ENCODE measurements at regions of chr1 and their contacts with region 1.

Region 1: DNA sequence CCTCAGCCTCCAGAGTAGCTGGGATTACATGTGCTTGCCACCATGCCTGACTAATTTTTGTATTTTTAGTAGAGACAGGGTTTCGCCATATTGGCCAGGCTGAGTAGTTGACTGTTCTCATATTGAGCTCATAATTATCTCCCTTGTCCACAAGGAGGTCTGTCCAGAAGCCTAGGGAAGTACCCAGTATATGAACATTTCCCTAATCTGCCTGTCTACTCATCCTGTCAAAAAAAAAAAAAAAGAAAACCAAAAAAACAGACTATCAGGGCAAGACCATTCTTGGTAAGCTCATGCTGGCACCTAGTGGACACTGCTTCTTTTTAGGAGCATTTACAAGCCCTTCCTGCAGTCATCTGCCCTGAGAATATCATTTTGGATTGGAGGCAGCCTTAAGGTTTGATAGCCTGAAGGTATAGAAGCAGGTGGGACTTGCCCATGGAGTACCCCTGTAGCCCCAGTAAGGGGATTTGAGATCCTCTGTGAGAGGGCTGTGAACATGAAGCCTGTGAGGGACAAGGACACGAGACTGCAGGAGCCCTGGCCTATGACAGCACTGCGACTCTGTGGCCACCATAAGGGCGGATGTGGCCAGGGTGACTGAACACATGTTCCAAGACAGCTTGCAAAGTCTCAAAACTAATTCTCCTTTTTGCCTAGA is 10.8 kb upstream of the DUSP12 start:
- DNase-seq: peak; percentile 84
- ATAC-seq: peak; percentile 85
- H3K4me3 Mint-ChIP-seq: peak overlapping the region; percentile 37
- H3K27ac Mint-ChIP-seq: peak overlapping the region; percentile 88
- H3K4me1 Mint-ChIP-seq: peaks cover 52% of the 10 kb centered on the region
- H3K27me3 Mint-ChIP-seq: no peaks in the 10 kb centered on the region

Region 2: DNA sequence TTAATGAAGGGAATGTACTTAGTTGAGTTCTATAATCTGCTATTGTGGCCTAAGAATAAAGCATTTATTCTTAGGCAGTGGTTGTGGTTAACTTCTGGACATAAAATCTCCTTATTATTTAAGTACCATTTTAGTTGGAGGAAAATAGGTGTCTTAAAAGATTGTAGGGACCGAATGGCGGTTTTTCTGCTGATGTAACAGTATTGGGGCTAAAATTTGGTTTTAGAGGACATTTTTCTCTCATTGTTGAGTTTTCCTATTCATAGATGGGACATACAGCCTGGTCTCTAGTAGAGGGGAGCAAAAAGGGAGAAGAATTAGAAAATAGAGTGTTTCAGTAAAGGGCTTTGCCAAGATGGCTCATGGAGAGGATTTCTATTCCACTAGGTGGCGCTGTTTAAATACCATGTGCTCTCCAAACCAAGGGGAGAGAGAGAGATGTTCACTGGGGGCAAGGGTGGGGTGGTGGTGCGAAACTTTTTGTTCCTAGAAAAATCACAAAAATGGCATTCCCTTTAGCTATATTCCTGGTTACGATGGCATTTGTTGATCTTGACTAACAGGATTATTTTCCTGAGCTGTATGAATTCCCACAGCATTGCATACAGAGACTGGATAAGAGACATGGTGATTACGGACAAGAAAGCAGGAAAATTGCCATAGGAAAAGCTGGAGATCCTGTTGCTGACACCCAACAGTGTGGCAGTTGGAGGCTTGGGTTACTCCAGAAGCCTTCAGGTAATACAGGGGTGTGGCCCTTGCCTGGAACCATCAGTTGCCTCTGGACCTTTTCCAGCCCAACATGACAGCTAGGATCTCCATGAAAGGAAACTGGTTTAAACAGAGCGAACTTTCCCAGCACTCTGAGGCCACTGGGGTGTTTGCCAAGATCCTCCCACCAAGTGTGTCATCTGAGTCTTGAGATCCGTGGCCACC is 251.7 kb before region 1 on chr1:
- CTCF ChIA-PET with region 1: interaction called, 89 read pairs
- POLR2A ChIA-PET with region 1: no interaction called
- DNase-seq: peak; percentile 66
- ATAC-seq: peak; percentile 73
- H3K4me3 Mint-ChIP-seq: no peak overlapping the region
- H3K27ac Mint-ChIP-seq: no peak overlapping the region
- H3K4me1 Mint-ChIP-seq: peaks cover 24% of the 10 kb centered on the region
- H3K27me3 Mint-ChIP-seq: peaks cover 38% of the 10 kb centered on the region

Region 3: GRCh38 chr1:161531986-161532643 is 206.6 kb before region 1 on chr1:
- CTCF ChIA-PET with region 1: interaction called, 12 read pairs
- POLR2A ChIA-PET with region 1: no interaction called
- DNase-seq: no peak
- ATAC-seq: no peak
- H3K4me3 Mint-ChIP-seq: no peak overlapping the region
- H3K27ac Mint-ChIP-seq: peak overlapping the region; percentile 57
- H3K4me1 Mint-ChIP-seq: peaks cover 23% of the 10 kb centered on the region
- H3K27me3 Mint-ChIP-seq: peaks cover 8% of the 10 kb centered on the region

Region 4: GRCh38 chr1:161726596-161727457 is 11.9 kb before region 1 on chr1:
- CTCF ChIA-PET with region 1: interaction called, 103 read pairs
- POLR2A ChIA-PET with region 1: interaction called, 21 read pairs
- DNase-seq: peak; percentile 85
- ATAC-seq: peak; percentile 71
- H3K4me3 Mint-ChIP-seq: peak overlapping the region; percentile 87
- H3K27ac Mint-ChIP-seq: peak overlapping the region; percentile 95
- H3K4me1 Mint-ChIP-seq: peaks cover 59% of the 10 kb centered on the region
- H3K27me3 Mint-ChIP-seq: peaks cover 22% of the 10 kb centered on the region

Region 5: DNA sequence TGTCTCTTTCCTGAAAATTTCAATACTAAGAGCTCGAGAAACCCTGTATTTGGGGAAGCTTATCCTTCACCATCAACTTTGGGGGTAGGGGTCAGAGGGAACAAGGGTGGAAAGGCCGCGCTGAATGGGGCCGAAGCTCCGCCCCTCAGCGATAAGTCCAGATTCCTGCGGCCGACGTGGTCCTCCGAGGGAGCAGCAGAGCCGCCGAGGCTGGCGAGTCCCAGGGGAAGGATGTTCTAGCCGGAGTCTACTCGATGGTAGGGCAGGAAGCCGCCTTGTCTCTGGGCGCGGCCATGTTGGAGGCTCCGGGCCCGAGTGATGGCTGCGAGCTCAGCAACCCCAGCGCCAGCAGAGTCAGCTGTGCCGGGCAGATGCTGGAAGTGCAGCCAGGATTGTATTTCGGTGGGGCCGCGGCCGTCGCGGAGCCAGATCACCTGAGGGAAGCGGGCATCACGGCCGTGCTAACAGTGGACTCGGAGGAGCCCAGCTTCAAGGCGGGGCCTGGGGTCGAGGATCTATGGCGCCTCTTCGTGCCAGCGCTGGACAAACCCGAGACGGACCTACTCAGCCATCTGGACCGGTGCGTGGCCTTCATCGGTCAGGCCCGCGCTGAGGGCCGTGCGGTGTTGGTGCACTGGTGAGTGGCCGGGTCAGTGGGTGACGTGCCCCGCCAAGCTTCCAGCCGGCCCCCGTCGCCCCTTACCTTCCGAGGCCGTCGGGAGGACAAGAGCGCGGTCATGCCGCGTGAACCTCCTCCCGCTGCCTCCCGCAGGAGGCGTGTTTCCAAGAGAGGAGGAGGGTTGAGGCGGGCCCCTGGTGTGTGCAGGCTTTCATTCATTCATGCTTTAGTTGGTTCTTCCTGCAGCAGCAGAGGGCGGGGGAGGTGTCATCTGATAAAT is 11.0 kb after region 1 on chr1 and contains the start of gene DUSP12:
- CTCF ChIA-PET with region 1: interaction called, 29 read pairs
- POLR2A ChIA-PET with region 1: interaction called, 6 read pairs
- DNase-seq: peak; percentile 92
- ATAC-seq: peak; percentile 97
- H3K4me3 Mint-ChIP-seq: peak within 1 kb of the TSS; percentile 95
- H3K27ac Mint-ChIP-seq: peak within 1 kb of the TSS; percentile 96
- H3K4me1 Mint-ChIP-seq: peaks cover 46% of the 10 kb centered on the region
- H3K27me3 Mint-ChIP-seq: peaks cover 5% of the 10 kb centered on the region
- total RNA-seq, gene DUSP12: 24.1 to 27.6 TPM

Region 6: GRCh38 chr1:161816201-161816600 is 77.4 kb after region 1 on chr1:
- CTCF ChIA-PET with region 1: no interaction called
- POLR2A ChIA-PET with region 1: no interaction called
- DNase-seq: no peak
- ATAC-seq: no peak
- H3K4me3 Mint-ChIP-seq: no peak overlapping the region
- H3K27ac Mint-ChIP-seq: no peak overlapping the region
- H3K4me1 Mint-ChIP-seq: no peaks in the 10 kb centered on the region
- H3K27me3 Mint-ChIP-seq: no peaks in the 10 kb centered on the region

Region 7: DNA sequence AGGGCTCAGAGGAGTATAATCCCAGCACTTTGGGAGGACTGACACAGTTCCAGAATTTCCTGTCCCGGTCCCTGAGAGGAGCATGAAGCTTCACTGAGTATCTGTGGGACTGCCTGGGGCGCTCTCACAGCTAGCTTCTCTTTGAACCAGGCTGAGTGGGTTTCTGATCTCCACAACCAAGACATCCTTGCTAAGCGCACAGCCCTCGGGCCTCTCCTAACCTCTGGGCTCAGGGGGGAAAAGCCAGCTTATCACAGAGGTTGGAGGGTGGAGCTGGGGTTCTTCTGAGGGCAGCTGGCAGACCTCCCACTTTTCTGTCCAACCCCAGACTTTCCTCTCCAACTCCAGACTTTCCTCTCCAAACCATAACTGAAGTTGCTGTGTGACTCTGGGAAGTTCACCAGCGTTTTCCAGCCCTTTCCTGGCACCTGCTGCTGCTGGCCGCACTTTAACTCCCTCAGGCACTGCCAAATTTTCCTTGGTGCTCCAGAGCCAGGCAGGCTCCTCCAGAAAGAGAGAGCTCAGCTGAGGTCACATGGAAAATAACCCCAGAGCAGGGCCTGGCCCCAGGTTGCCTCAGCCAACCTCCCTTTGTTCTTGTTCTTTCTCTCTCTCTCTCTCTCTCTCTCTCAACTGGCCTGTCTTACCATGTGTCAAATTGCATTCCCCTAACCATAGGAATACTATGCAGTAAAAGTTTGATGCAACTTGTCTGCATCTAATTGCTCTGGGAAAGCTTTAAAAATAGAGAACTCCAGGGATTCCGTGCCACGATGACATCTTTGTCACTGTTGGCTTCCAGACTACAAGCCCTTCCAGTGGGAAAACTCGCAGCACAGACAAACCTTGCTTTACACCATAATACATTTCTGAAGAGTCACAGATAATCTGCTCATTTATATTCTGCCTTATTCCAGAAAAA is 235.4 kb after region 1 on chr1:
- CTCF ChIA-PET with region 1: no interaction called
- POLR2A ChIA-PET with region 1: no interaction called
- DNase-seq: no peak
- ATAC-seq: no peak
- H3K4me3 Mint-ChIP-seq: no peak overlapping the region
- H3K27ac Mint-ChIP-seq: peak overlapping the region; percentile 40
- H3K4me1 Mint-ChIP-seq: no peaks in the 10 kb centered on the region
- H3K27me3 Mint-ChIP-seq: no peaks in the 10 kb centered on the region

Measured in activated CD8-positive, alpha-beta T cell treated with anti-CD3 and anti-CD28 coated beads, Interleukin-2, amount 10 ng/mL, durations not matched to agents 7 days and 5 days (primary cell).